PC-3 (cell line): ENCODE measurements at regions of chr9 and their contacts with region 1.

Region 1: GRCh38 chr9:3875364-3876132 is 349.7 kb upstream of the RFX3 start:
- DNase-seq: peak; percentile 97
- ATAC-seq: peak; percentile 76
- H3K4me3 ChIP-seq: peak overlapping the region; percentile 10; the same call in 1 of the 2 replicates
- H3K27ac ChIP-seq: peak overlapping the region; percentile 99
- H3K4me1 ChIP-seq: peaks cover 35% of the 10 kb centered on the region
- H3K27me3 ChIP-seq: no peaks in the 10 kb centered on the region
- CTCF ChIP-seq: no peak

Region 2: GRCh38 chr9:3525836-3526164 is 349.7 kb before region 1 on chr9 and contains the start of gene RFX3:
- CTCF ChIA-PET with region 1: no interaction called
- POLR2A ChIA-PET with region 1: no interaction called
- intact Hi-C with region 1: loop called (anchors 5 kb)
- DNase-seq: peak; percentile 79
- ATAC-seq: peak; percentile 66
- H3K4me3 ChIP-seq: peak within 1 kb of the TSS; percentile 82
- H3K27ac ChIP-seq: peak within 1 kb of the TSS; percentile 100
- H3K4me1 ChIP-seq: peaks cover 11% of the 10 kb centered on the region; the same call in 1 of the 2 replicates
- H3K27me3 ChIP-seq: no peaks in the 10 kb centered on the region
- CTCF ChIP-seq: no peak
- total RNA-seq, gene RFX3: 2.3 and 4.5 TPM in 2 replicates

Region 3: GRCh38 chr9:3721096-3721495 is 154.5 kb before region 1 on chr9:
- CTCF ChIA-PET with region 1: no interaction called
- POLR2A ChIA-PET with region 1: no interaction called
- intact Hi-C with region 1: no loop called
- DNase-seq: no peak
- ATAC-seq: no peak
- H3K4me3 ChIP-seq: no peak overlapping the region
- H3K27ac ChIP-seq: no peak overlapping the region
- H3K4me1 ChIP-seq: no peaks in the 10 kb centered on the region
- H3K27me3 ChIP-seq: no peaks in the 10 kb centered on the region
- CTCF ChIP-seq: no peak

Region 4: GRCh38 chr9:3962971-3963642 is 87.6 kb after region 1 on chr9:
- CTCF ChIA-PET with region 1: no interaction called
- POLR2A ChIA-PET with region 1: no interaction called
- intact Hi-C with region 1: loop called (anchors 2 kb)
- DNase-seq: peak; percentile 90
- ATAC-seq: peak; percentile 88
- H3K4me3 ChIP-seq: peak overlapping the region; percentile 23; the same call in 1 of the 2 replicates
- H3K27ac ChIP-seq: peak overlapping the region; percentile 97
- H3K4me1 ChIP-seq: peaks cover 39% of the 10 kb centered on the region
- H3K27me3 ChIP-seq: no peaks in the 10 kb centered on the region
- CTCF ChIP-seq: no peak

Region 5: DNA sequence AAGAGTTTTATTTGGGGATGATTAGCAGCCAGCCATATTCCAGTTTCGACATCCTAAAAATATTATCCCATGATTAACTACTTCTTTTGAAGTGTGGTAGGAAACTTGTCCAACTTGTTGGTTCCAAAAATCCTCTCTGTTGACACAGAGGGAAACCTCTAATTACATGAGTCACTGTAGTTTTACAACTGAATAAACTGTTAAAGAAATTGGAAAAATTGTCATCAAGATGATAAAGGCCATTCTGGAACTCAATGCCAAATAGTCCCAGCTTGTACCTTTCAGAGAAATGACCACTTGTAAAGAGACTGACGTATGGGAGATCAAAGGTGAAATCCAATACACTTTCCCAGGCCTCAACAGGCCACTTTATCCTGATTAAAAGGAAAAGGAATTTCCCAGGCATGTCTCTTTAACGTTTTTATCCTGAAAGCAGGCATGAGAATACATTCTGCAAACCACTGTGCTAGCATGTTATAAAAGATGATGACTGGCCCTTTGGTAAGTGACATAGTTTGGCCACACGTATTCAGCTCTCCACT is 162.7 kb after region 1 on chr9:
- CTCF ChIA-PET with region 1: no interaction called
- POLR2A ChIA-PET with region 1: no interaction called
- intact Hi-C with region 1: loop called (anchors 5 kb)
- DNase-seq: peak; percentile 75
- ATAC-seq: peak; percentile 86
- H3K4me3 ChIP-seq: no peak overlapping the region
- H3K27ac ChIP-seq: peak overlapping the region; percentile 97
- H3K4me1 ChIP-seq: peaks cover 26% of the 10 kb centered on the region
- H3K27me3 ChIP-seq: no peaks in the 10 kb centered on the region
- CTCF ChIP-seq: no peak